Activated CD4-positive, alpha-beta memory T cell treated with anti-CD3 and anti-CD28 coated beads for 36 hours (primary cell): ENCODE measurements at regions of chr2 and their contacts with region 1.

Region 1: DNA sequence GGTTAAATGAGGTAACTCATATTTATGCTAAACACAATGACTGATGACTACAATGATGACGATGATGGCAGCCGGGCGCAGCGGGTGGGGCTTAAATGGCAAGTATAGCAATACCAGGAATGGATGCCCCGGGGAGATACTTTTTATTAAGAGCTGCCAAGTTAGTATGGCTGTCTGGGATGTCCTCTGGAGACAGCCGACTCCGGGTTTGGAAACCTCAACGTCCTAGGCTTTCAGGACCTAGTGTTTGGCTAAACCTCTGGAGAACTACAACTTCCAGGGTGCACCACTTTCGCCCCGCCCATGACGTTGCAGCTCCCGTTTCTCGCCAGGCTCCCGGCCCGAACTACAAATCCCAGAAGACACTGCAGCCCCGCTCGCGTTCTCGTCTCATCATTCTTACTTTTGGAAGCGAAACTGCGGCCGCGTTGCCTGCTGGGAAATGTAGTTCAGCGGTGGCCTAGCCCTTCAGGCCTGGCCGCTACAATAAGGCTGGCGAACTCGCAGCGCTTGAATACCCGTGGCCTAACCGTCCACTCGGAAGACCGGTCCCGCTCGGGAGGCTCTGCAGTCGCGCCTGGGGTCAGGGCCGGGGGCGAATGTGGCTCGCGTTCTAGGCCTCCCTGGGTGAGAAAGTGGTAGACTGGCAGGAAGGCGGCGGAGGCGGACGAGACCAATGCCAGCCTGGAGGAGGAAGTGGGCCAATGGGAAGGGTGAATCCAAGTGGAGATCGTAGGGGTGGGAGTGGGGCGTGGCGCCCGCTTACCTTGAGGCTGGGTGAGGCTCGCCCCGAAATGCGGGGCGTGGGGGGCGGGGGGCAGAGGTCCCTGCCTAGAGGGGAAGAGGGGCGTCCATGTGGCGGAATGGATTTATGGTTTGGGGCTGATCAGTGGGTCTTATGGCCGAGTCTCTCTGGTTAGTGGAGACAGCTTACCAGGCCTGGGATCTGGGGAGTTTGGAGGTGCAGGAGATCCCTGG is at the start of gene SMARCAL1:
- DNase-seq: peak; percentile 99
- H3K4me3 Mint-ChIP-seq: peak within 1 kb of the TSS; percentile 95
- H3K27ac Mint-ChIP-seq: peak within 1 kb of the TSS; percentile 94
- H3K4me1 Mint-ChIP-seq: peaks cover 8% of the 10 kb centered on the region
- H3K27me3 Mint-ChIP-seq: peaks cover 2% of the 10 kb centered on the region
- total RNA-seq, gene SMARCAL1: 20.8 to 25.2 TPM

Region 2: DNA sequence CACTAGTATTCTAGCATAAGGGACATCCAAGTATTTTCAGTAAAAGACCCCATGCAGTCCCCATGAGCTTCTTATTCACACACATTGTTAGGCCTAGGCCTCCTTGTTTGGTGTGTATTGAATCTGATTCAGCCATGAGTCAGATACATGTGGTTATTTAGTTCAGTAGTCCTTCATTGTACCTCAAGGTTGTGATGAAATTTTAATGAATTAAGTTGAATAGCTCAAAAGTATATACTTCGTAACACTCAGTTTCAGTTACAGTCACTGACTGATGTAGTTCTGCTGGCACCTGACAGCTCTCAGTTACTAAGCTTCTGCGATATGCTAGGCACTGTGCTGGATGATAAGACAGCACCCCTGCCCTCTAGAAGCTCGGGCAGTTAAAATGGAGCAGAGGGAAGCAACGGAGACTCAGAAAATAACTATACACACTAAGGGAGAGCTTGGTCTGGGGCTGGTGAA is 216.7 kb before region 1 on chr2:
- CTCF ChIA-PET with region 1: no interaction called
- POLR2A ChIA-PET with region 1: interaction called, 3 read pairs
- intact Hi-C with region 1: loop called (anchors 1 kb)
- DNase-seq: peak; percentile 55
- H3K4me3 Mint-ChIP-seq: peak overlapping the region; percentile 31
- H3K27ac Mint-ChIP-seq: peak overlapping the region; percentile 91
- H3K4me1 Mint-ChIP-seq: peaks cover 66% of the 10 kb centered on the region
- H3K27me3 Mint-ChIP-seq: no peaks in the 10 kb centered on the region

Region 3: DNA sequence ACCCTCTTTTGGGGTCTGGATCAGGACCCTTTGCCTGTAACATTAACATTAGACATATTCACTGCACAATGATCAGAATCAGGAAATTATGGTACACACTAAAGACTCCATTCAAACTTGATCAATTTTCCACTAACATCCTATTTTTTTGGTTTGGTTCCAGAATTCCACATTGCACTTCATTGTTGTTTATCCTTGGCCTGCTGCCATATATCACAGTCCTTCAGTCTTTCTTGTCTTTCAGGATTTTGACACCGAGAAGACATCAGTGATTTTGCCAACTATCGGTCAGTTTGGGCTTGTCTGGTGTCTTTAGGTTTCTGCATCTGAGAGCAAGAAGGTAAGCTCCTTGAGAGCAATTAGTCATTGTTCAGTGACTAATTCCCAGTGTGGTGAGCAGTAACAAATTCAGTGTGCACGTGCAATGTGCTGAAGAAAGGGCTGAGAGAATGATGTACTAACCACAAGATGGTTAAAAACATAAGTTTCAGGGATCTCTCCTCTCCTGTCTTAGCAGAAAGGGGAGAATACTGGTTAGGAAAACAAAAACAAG is 63.5 kb before region 1 on chr2:
- CTCF ChIA-PET with region 1: no interaction called
- POLR2A ChIA-PET with region 1: no interaction called
- intact Hi-C with region 1: loop called (anchors 1 kb)
- DNase-seq: peak; percentile 52
- H3K4me3 Mint-ChIP-seq: no peak overlapping the region
- H3K27ac Mint-ChIP-seq: peak overlapping the region; percentile 36
- H3K4me1 Mint-ChIP-seq: peaks cover 66% of the 10 kb centered on the region
- H3K27me3 Mint-ChIP-seq: no peaks in the 10 kb centered on the region

Region 4: GRCh38 chr2:216426938-216427337 is 14.6 kb after region 1 on chr2:
- CTCF ChIA-PET with region 1: no interaction called
- POLR2A ChIA-PET with region 1: no interaction called
- intact Hi-C with region 1: no loop called
- DNase-seq: no peak
- H3K4me3 Mint-ChIP-seq: no peak overlapping the region
- H3K27ac Mint-ChIP-seq: no peak overlapping the region
- H3K4me1 Mint-ChIP-seq: peaks cover 3% of the 10 kb centered on the region
- H3K27me3 Mint-ChIP-seq: no peaks in the 10 kb centered on the region

Region 5: GRCh38 chr2:216478151-216478550 is 65.8 kb after region 1 on chr2:
- CTCF ChIA-PET with region 1: no interaction called
- POLR2A ChIA-PET with region 1: no interaction called
- intact Hi-C with region 1: loop called (anchors 5 kb)
- DNase-seq: peak; percentile 52
- H3K4me3 Mint-ChIP-seq: no peak overlapping the region
- H3K27ac Mint-ChIP-seq: no peak overlapping the region
- H3K4me1 Mint-ChIP-seq: peaks cover 15% of the 10 kb centered on the region
- H3K27me3 Mint-ChIP-seq: no peaks in the 10 kb centered on the region

Region 6: GRCh38 chr2:216666461-216667233 is 254.3 kb after region 1 on chr2:
- CTCF ChIA-PET with region 1: no interaction called
- POLR2A ChIA-PET with region 1: no interaction called
- intact Hi-C with region 1: loop called (anchors 5 kb)
- DNase-seq: peak; percentile 79
- H3K4me3 Mint-ChIP-seq: no peak overlapping the region
- H3K27ac Mint-ChIP-seq: no peak overlapping the region
- H3K4me1 Mint-ChIP-seq: no peaks in the 10 kb centered on the region
- H3K27me3 Mint-ChIP-seq: peaks cover 3% of the 10 kb centered on the region